H1 (cell line): ENCODE measurements at regions of chr12 and their contacts with region 1.

Region 1: GRCh38 chr12:107912421-107913004 is 138.0 kb downstream of the ASCL4 start:
- DNase-seq: peak in 1 of 2 experiments; percentile 98
- H3K4me3 ChIP-seq: peak overlapping the region; percentile 36 to 77 (median 66); a peak in 7 of 8 replicates
- H3K27ac ChIP-seq: no peak overlapping the region
- H3K4me1 ChIP-seq: no peaks in the 10 kb centered on the region; a peak in 1 of 7 replicates
- H3K27me3 ChIP-seq: peaks cover 0 to 2% (median 0%) of the 10 kb centered on the region in 4 experiments; a peak in 3 of 7 replicates
- CTCF ChIP-seq: peak; percentile 96 to 98 (median 98)
- EP300 ChIP-seq: no peak
- POLR2A ChIP-seq: no peak
- RAD21 ChIP-seq: peak; percentile 47 to 59

Region 2: GRCh38 chr12:107891972-107892371 is 20.5 kb before region 1 on chr12:
- CTCF ChIA-PET with region 1: interaction called, 22 read pairs
- POLR2A ChIA-PET with region 1: no interaction called
- DNase-seq: no peak
- H3K4me3 ChIP-seq: no peak overlapping the region
- H3K27ac ChIP-seq: no peak overlapping the region
- H3K4me1 ChIP-seq: no peaks in the 10 kb centered on the region
- H3K27me3 ChIP-seq: no peaks in the 10 kb centered on the region
- CTCF ChIP-seq: peak; percentile 32 to 80 (median 51)
- EP300 ChIP-seq: no peak
- POLR2A ChIP-seq: no peak
- RAD21 ChIP-seq: peak; percentile 56 to 60

Region 3: GRCh38 chr12:107929436-107929835 is 16.9 kb after region 1 on chr12:
- CTCF ChIA-PET with region 1: interaction called, 65 read pairs
- POLR2A ChIA-PET with region 1: no interaction called
- DNase-seq: no peak
- H3K4me3 ChIP-seq: no peak overlapping the region
- H3K27ac ChIP-seq: no peak overlapping the region
- H3K4me1 ChIP-seq: no peaks in the 10 kb centered on the region
- H3K27me3 ChIP-seq: no peaks in the 10 kb centered on the region
- CTCF ChIP-seq: peak in 2 of 3 experiments; percentile 54 to 67; a peak in 3 of 4 replicates
- EP300 ChIP-seq: no peak
- POLR2A ChIP-seq: no peak
- RAD21 ChIP-seq: peak; percentile 67 to 80

Region 4: GRCh38 chr12:108090107-108090899 is 177.8 kb after region 1 on chr12:
- CTCF ChIA-PET with region 1: no interaction called
- POLR2A ChIA-PET with region 1: no interaction called
- DNase-seq: no peak
- H3K4me3 ChIP-seq: no peak overlapping the region
- H3K27ac ChIP-seq: no peak overlapping the region
- H3K4me1 ChIP-seq: peaks cover 0 to 4% (median 1%) of the 10 kb centered on the region in 4 experiments; a peak in 2 of 7 replicates
- H3K27me3 ChIP-seq: no peaks in the 10 kb centered on the region; a peak in 1 of 7 replicates
- CTCF ChIP-seq: no peak
- EP300 ChIP-seq: no peak
- POLR2A ChIP-seq: no peak
- RAD21 ChIP-seq: no peak

Region 5: DNA sequence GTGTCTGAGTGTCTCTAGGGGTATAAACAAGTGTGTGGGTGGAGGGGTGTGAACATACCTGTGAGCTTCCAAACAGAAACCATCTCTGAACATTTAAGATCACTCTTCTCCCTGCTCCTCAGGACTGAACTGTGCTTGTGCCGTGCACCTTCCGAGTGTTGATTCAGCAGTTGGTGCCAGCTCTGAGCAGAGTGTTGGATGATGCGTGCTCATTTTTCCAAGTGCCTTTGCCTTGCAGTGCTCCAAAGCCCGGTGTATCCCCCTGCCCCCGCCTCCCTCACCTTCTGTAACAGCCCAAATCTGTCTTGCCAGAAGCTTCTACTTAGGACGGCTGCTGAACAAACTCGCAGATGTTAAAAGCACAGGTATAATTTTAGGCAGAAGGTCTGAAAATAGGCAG is 221.0 kb after region 1 on chr12:
- CTCF ChIA-PET with region 1: no interaction called
- POLR2A ChIA-PET with region 1: no interaction called
- DNase-seq: no peak
- H3K4me3 ChIP-seq: no peak overlapping the region
- H3K27ac ChIP-seq: no peak overlapping the region
- H3K4me1 ChIP-seq: peaks cover 0 to 19% (median 5%) of the 10 kb centered on the region in 4 experiments; a peak in 5 of 7 replicates
- H3K27me3 ChIP-seq: peaks cover 0 to 12% (median 6%) of the 10 kb centered on the region in 4 experiments; a peak in 3 of 7 replicates
- CTCF ChIP-seq: no peak
- EP300 ChIP-seq: no peak
- POLR2A ChIP-seq: no peak
- RAD21 ChIP-seq: no peak